ENCODE measurements at regions of chr1 and their contacts with region 1.

Region 1: GRCh38 chr1:103106426-103107341 is 1.6 kb downstream of the COL11A1 start:
- DNase-seq: peak in 2 of 5 donors; percentile 8 to 33
- ATAC-seq: peak in 3 of 4 donors; percentile 59 to 74 (median 72)
- H3K4me3 ChIP-seq: peak overlapping the region in 11 of 12 donors; percentile 6 to 53 (median 37)
- H3K27ac ChIP-seq: no peak overlapping the region
- H3K4me1 ChIP-seq: peaks cover 0 to 21% (median 1%) of the 10 kb centered on the region in 12 donors
- H3K27me3 ChIP-seq: peaks cover 0 to 20% (median 4%) of the 10 kb centered on the region in 9 donors
- CTCF ChIP-seq: peak; percentile 20 to 62 (median 44)
- POLR2A ChIP-seq: no peak

Region 2: DNA sequence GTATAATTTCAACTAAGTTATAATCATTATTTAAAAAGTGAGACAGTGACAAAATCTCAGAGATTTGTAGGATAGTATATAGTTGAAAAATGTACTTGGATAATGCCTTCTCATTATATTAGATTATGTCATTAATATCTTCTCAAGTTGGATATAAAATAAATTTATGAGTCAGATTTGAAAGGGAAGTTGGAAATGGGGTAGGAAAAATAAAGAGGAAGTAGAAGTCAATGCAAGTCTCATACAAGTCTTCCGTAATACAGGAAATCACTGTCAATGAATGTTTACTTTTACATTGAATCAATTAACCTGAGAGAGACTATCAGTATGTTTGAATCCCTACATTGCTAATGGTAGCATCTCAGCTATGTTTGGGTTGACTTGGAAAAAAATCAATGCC is 402.6 kb after region 1 on chr1:
- intact Hi-C with region 1: loop called in 7 of 10 experiments (anchors 2 to 10 kb)
- DNase-seq: no peak
- ATAC-seq: no peak
- H3K4me3 ChIP-seq: no peak overlapping the region
- H3K27ac ChIP-seq: no peak overlapping the region
- H3K4me1 ChIP-seq: no peaks in the 10 kb centered on the region
- H3K27me3 ChIP-seq: no peaks in the 10 kb centered on the region
- CTCF ChIP-seq: no peak
- POLR2A ChIP-seq: no peak

Region 3: DNA sequence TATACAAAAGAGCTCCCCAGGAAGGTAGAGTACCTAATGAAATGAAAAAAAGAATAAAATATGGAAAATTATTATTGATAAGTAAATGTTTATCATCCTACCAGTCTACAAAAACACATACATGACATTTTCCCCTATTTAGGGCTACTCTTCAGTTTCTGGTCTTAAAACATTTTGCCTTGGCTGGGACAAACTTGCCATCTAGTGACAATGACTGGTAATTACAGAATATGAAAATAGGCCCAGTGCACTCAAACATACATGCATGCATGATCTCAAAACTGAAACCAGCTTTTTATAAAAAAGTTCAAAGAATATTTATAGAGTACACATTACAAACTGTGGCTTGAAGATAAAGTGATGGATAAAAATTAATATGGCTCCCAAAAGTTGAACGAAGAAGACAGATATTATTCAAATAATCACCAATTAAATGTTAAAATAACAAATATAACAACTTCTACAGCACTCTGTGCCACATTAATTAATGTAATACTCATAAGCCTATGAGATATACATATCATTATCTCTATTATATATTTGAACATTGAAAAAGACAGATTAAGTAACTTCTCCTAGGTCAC is 408.3 kb after region 1 on chr1:
- intact Hi-C with region 1: loop called in 7 of 10 experiments (anchors 2 to 10 kb)
- DNase-seq: no peak
- ATAC-seq: no peak
- H3K4me3 ChIP-seq: no peak overlapping the region
- H3K27ac ChIP-seq: no peak overlapping the region
- H3K4me1 ChIP-seq: no peaks in the 10 kb centered on the region
- H3K27me3 ChIP-seq: no peaks in the 10 kb centered on the region
- CTCF ChIP-seq: peak; percentile 52 to 77 (median 70)
- POLR2A ChIP-seq: no peak

Region 4: DNA sequence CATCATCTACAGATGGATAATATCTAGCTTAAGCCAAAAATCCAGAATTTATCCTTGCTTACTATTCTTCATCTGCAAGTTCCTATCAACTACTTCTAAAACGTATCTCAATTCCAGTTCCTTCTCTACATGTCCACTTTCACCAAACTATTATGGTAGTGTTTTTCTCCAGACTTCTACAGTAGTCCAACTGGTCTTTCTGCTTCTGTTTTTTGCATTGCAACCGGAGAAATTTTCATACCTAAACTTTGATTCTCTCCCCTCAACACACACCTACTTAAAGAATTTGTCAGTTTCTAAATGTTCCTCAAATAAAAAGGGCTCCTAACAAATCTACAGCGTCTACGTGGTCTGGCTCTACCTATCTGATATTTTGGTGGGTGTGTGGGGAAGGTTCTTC is 417.6 kb after region 1 on chr1:
- intact Hi-C with region 1: loop called in 2 of 10 experiments (anchors 5 to 10 kb)
- DNase-seq: no peak
- ATAC-seq: no peak
- H3K4me3 ChIP-seq: no peak overlapping the region
- H3K27ac ChIP-seq: no peak overlapping the region
- H3K4me1 ChIP-seq: peaks cover 0 to 35% (median 26%) of the 10 kb centered on the region in 12 donors
- H3K27me3 ChIP-seq: no peaks in the 10 kb centered on the region
- CTCF ChIP-seq: no peak
- POLR2A ChIP-seq: no peak